CD4-positive, alpha-beta T cell (primary cell): ENCODE measurements at regions of chr6 and their contacts with region 1.

Region 1: GRCh38 chr6:97136335-97136991 is 146.6 kb downstream of the MMS22L start:
- DNase-seq: no peak
- ATAC-seq: no peak
- H3K4me3 ChIP-seq: no peak overlapping the region
- H3K4me3 Mint-ChIP-seq: no peak overlapping the region
- H3K27ac ChIP-seq: no peak overlapping the region
- H3K27ac Mint-ChIP-seq: no peak overlapping the region
- H3K4me1 ChIP-seq: no peaks in the 10 kb centered on the region
- H3K4me1 Mint-ChIP-seq: no peaks in the 10 kb centered on the region
- H3K27me3 ChIP-seq: no peaks in the 10 kb centered on the region
- H3K27me3 Mint-ChIP-seq: no peaks in the 10 kb centered on the region
- CTCF ChIP-seq: no peak

Region 2: GRCh38 chr6:96743496-96743895 is 393.0 kb before region 1 on chr6:
- CTCF ChIA-PET with region 1: no interaction called
- POLR2A ChIA-PET with region 1: no interaction called
- intact Hi-C with region 1: no loop called
- DNase-seq: no peak
- ATAC-seq: no peak
- H3K4me3 ChIP-seq: no peak overlapping the region
- H3K4me3 Mint-ChIP-seq: no peak overlapping the region
- H3K27ac ChIP-seq: no peak overlapping the region
- H3K27ac Mint-ChIP-seq: no peak overlapping the region
- H3K4me1 ChIP-seq: no peaks in the 10 kb centered on the region
- H3K4me1 Mint-ChIP-seq: no peaks in the 10 kb centered on the region
- H3K27me3 ChIP-seq: no peaks in the 10 kb centered on the region
- H3K27me3 Mint-ChIP-seq: peaks cover 4% of the 10 kb centered on the region
- CTCF ChIP-seq: no peak

Region 3: DNA sequence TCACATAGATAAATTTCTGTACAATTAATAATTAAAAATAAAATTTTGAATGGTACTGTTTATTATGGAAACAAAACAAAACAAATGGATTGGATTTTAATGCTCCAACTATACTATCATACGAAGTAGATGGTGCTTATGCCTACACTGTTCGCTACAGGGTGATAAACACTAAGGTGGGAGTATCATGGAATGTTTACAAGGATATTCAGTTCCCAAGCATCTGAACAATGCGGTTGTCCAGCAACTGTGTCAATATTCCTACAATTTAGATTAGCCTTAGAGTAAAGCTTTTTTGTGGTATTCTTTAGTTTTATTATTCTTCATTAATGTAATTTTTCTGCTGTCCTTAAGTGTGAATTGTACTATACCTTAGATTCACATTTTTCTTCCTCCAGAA is 41.4 kb after region 1 on chr6:
- CTCF ChIA-PET with region 1: no interaction called
- POLR2A ChIA-PET with region 1: no interaction called
- intact Hi-C with region 1: no loop called
- DNase-seq: no peak
- ATAC-seq: no peak
- H3K4me3 ChIP-seq: no peak overlapping the region
- H3K4me3 Mint-ChIP-seq: no peak overlapping the region
- H3K27ac ChIP-seq: no peak overlapping the region
- H3K27ac Mint-ChIP-seq: no peak overlapping the region
- H3K4me1 ChIP-seq: no peaks in the 10 kb centered on the region
- H3K4me1 Mint-ChIP-seq: no peaks in the 10 kb centered on the region
- H3K27me3 ChIP-seq: no peaks in the 10 kb centered on the region
- H3K27me3 Mint-ChIP-seq: no peaks in the 10 kb centered on the region
- CTCF ChIP-seq: no peak

Region 4: GRCh38 chr6:98179606-98180005 is 1043.1 kb after region 1 on chr6:
- CTCF ChIA-PET with region 1: no interaction called
- POLR2A ChIA-PET with region 1: no interaction called
- intact Hi-C with region 1: loop called in 1 of 2 experiments (anchors 5 kb)
- DNase-seq: no peak
- ATAC-seq: no peak
- H3K4me3 ChIP-seq: no peak overlapping the region
- H3K4me3 Mint-ChIP-seq: no peak overlapping the region
- H3K27ac ChIP-seq: no peak overlapping the region
- H3K27ac Mint-ChIP-seq: no peak overlapping the region
- H3K4me1 ChIP-seq: no peaks in the 10 kb centered on the region
- H3K4me1 Mint-ChIP-seq: no peaks in the 10 kb centered on the region
- H3K27me3 ChIP-seq: no peaks in the 10 kb centered on the region
- H3K27me3 Mint-ChIP-seq: no peaks in the 10 kb centered on the region
- CTCF ChIP-seq: no peak